MCF 10A (cell line): ENCODE measurements at regions of chrX and their contacts with region 1.

Region 1: DNA sequence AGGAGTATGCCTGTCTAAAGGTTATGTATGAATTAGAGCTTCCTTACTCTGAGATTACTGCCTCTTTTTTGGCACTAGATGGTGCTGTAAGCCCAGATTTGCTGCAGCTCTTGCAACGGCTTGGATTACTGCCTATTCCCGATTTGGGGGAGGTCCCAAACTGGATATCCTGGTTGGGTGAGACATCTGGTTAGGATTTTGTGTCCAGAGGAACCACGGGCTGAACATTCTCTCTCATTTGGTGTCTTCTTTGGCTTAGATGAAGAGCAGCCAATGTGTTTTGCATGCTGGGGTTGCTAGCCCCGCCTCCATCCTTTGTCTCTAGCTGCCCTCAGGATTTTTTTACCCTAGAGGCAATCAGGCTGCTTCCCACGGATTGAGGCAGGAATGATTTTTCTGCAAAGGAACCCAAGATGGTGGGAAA is 31.9 kb downstream of the F8A1 start:
- DNase-seq: peak; percentile 79
- H3K4me3 Mint-ChIP-seq: peak overlapping the region; percentile 56
- H3K27ac Mint-ChIP-seq: no peak overlapping the region
- H3K4me1 Mint-ChIP-seq: no peaks in the 10 kb centered on the region
- H3K27me3 Mint-ChIP-seq: peaks cover 44% of the 10 kb centered on the region
- CTCF ChIP-seq: peak; percentile 76

Region 2: DNA sequence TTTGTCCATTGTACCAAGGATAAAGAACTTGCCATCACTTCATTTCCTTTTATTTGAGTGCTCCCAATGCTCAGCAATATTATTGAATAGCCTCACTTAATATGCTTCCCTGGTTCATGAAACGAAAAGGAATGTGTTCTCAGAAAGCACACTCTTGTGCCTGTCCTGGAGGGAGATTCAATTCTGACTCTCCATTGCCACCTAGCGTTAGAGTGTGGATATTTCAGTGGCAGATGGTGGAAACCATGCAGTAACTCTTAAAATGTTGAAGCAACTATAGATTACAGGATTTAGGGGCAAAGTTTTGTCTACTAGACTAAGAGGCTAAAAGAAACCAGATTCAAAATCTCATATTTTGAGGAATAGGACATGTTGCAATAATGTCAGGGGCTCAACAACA is 203.1 kb before region 1 on chrX:
- CTCF ChIA-PET with region 1: no interaction called
- POLR2A ChIA-PET with region 1: no interaction called
- intact Hi-C with region 1: no loop called
- DNase-seq: peak; percentile 80
- H3K4me3 Mint-ChIP-seq: no peak overlapping the region
- H3K27ac Mint-ChIP-seq: no peak overlapping the region
- H3K4me1 Mint-ChIP-seq: peaks cover 42% of the 10 kb centered on the region
- H3K27me3 Mint-ChIP-seq: no peaks in the 10 kb centered on the region
- CTCF ChIP-seq: peak; percentile 79

Region 3: DNA sequence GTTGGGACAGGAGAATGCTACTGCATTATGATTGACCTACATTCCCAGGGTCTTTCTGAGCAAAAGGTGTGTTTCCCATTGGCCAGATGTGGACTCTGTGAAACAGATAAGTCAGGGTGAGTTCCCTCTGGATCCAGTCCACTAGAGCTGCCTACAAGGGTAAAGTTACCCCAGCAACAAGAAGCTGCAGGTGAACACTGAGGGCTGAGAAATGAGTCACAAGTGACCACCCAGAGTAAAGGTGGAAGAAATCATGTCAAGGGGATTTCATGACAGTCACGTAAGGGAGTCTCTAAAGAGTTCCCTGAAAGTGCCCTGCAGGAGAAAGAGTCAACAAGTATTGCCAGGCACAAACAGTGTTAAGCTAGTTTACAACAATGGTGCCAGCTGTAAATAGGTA is 15.7 kb before region 1 on chrX:
- CTCF ChIA-PET with region 1: interaction called, 46 read pairs
- POLR2A ChIA-PET with region 1: interaction called, 4 read pairs
- intact Hi-C with region 1: no loop called
- DNase-seq: no peak
- H3K4me3 Mint-ChIP-seq: no peak overlapping the region
- H3K27ac Mint-ChIP-seq: no peak overlapping the region
- H3K4me1 Mint-ChIP-seq: no peaks in the 10 kb centered on the region
- H3K27me3 Mint-ChIP-seq: peaks cover 27% of the 10 kb centered on the region
- CTCF ChIP-seq: no peak

Region 4: GRCh38 chrX:155056877-155057792 is 139.1 kb after region 1 on chrX:
- CTCF ChIA-PET with region 1: interaction called, 5 read pairs
- POLR2A ChIA-PET with region 1: no interaction called
- intact Hi-C with region 1: loop called (anchors 1 kb)
- DNase-seq: peak; percentile 70
- H3K4me3 Mint-ChIP-seq: no peak overlapping the region
- H3K27ac Mint-ChIP-seq: no peak overlapping the region
- H3K4me1 Mint-ChIP-seq: no peaks in the 10 kb centered on the region
- H3K27me3 Mint-ChIP-seq: peaks cover 29% of the 10 kb centered on the region
- CTCF ChIP-seq: peak; percentile 68

Region 5: GRCh38 chrX:155086202-155086840 is 168.2 kb after region 1 on chrX:
- CTCF ChIA-PET with region 1: interaction called, 11 read pairs
- POLR2A ChIA-PET with region 1: no interaction called
- intact Hi-C with region 1: loop called (anchors 5 kb)
- DNase-seq: peak; percentile 62
- H3K4me3 Mint-ChIP-seq: no peak overlapping the region
- H3K27ac Mint-ChIP-seq: no peak overlapping the region
- H3K4me1 Mint-ChIP-seq: no peaks in the 10 kb centered on the region
- H3K27me3 Mint-ChIP-seq: peaks cover 40% of the 10 kb centered on the region
- CTCF ChIP-seq: peak; percentile 61

Region 6: DNA sequence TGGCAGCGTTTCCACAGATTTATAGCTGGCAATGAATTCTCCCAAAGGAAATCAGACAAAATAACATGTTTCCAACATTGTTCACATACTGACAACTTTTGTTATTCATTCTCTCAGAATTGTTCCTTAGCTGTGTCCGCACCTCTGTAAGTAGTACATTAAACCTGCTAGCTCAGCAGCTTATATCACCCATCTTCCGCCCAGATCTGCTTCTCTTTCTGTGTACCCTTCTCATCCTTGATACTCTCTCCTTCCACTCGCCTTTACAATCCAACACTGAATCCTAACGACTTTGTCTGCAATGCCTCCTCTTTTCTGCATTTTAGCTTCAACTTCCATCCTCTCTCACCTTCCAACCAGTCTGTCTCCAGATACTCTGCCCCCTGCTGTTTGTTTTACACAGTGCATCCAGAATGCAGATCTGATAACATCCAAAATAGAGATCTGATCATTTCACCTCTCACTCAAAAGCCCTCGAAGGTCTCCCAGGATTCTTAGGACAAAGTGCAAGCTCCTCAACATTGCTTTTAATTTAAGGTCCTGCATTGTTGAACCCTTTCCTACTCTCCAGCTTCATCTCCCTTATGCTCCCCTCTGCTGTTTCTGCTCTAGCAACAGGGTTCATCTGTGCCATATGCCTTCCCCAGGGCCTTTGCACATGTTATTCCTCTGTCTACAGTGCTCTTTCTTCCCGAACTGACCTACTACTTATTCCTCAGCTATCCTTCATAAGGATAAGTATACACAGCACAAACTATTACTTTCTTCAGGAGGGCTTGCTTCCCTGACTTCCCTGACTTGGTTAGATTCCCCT is 230.9 kb after region 1 on chrX:
- CTCF ChIA-PET with region 1: interaction called, 8 read pairs
- POLR2A ChIA-PET with region 1: no interaction called
- intact Hi-C with region 1: loop called (anchors 2 kb)
- DNase-seq: peak; percentile 54
- H3K4me3 Mint-ChIP-seq: no peak overlapping the region
- H3K27ac Mint-ChIP-seq: no peak overlapping the region
- H3K4me1 Mint-ChIP-seq: no peaks in the 10 kb centered on the region
- H3K27me3 Mint-ChIP-seq: no peaks in the 10 kb centered on the region
- CTCF ChIP-seq: peak; percentile 46

Region 7: GRCh38 chrX:155819966-155820491 is 902.0 kb after region 1 on chrX:
- CTCF ChIA-PET with region 1: no interaction called
- POLR2A ChIA-PET with region 1: no interaction called
- intact Hi-C with region 1: loop called (anchors 5 kb)
- DNase-seq: peak; percentile 91
- H3K4me3 Mint-ChIP-seq: no peak overlapping the region
- H3K27ac Mint-ChIP-seq: no peak overlapping the region
- H3K4me1 Mint-ChIP-seq: peaks cover 6% of the 10 kb centered on the region
- H3K27me3 Mint-ChIP-seq: no peaks in the 10 kb centered on the region
- CTCF ChIP-seq: peak; percentile 61